ENCODE measurements at regions of chr22 and their contacts with region 1.

Region 1: DNA sequence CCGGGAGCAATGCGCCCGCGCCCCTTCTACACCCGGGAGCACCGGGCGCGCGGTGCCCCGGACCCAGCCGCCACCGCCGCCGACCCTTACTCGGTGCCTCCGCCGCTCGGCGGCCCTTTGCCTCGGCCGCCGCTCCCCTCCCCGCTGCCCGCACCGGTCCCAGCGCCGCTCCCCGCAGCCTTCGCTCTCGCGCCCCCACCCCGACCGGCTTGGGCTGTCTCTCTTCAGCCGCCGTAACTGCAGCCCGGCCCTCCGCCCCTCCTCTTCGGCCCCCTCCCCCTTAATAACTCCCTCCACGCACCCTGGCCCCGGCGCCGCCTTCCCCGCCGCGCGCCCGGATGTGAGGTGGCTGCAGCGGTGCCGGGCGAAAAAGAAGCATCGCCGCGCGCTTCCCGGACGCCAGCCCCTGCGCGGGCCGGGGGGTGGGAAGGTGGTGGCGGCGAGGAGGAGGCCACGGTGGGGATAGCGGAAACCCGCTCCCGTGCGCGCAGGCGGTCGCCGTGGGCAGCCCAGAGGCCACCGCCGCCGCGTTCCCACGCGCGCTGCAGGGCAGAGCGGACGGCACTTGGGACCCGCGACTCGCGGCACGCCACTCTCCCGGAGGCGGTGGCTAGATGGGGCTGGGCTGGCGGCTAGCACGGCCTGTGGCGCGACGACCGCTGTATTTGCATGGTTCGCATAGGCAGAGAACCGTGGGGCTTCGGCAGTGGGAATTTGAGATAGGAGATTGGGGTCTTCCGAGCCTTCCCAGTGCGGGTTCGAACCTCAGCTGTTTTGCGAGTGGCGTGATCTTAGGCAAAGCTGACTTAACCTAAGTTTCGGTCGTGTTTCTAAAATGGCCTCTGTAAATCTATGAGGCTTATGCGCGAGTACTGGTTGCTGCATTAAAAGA is at the start of gene EIF4ENIF1:
- DNase-seq: peak; percentile 93
- ATAC-seq: peak; percentile 67
- H3K4me3 ChIP-seq: peak within 1 kb of the TSS; percentile 67 to 100 (median 84)
- H3K4me3 Mint-ChIP-seq: peak within 1 kb of the TSS; percentile 91
- H3K27ac ChIP-seq: peak within 1 kb of the TSS; percentile 93 to 99
- H3K27ac Mint-ChIP-seq: peak within 1 kb of the TSS; percentile 98
- H3K4me1 ChIP-seq: peaks cover 29 to 47% of the 10 kb centered on the region in 2 donors
- H3K4me1 Mint-ChIP-seq: peaks cover 52% of the 10 kb centered on the region
- H3K27me3 ChIP-seq: no peaks in the 10 kb centered on the region
- H3K27me3 Mint-ChIP-seq: no peaks in the 10 kb centered on the region
- CTCF ChIP-seq: no peak
- total RNA-seq, gene EIF4ENIF1: 58.3 and 62.7 TPM in 2 replicates

Region 2: DNA sequence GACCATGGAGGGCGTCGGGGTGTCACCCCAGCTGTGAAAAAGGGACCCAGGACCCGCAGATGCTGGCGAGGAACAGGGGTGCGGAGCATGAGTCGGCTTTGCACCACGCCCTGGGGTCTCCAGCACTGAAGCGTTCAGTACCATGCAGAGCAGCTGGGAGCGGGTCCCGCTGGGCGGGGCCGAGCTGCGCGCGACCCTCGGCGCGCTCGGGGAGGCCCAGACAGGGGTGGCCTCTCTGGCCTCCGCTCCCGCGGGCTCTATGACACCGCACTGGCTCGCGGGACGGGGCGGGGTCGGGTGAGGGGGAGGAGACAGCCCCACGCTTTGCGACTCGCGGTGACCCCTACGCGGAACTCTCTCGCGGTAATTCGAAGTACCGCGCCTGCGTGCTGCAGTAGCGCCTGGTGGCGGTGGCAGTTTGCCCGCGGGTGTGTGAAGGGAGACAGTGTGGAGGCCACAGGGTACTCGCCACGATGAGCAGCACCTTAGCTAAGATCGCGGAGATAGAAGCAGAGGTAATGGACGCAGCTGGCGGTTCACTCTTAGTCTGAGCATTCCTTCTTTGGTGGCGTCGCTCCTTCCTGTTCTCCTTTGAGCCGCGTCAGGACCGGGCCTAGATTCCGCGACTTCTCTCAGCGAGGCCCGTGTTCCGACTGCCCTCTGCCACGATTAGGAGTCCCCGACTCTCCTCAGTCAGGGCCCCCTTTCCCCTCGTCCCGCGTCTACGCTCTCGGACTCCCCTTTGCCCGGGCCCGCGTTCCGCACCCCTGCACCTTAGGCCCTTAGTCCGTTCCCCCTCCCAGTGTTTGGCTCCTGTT is 90.4 kb before region 1 on chr22 and contains the start of gene DRG1:
- CTCF ChIA-PET with region 1: interaction called, 3 read pairs
- POLR2A ChIA-PET with region 1: no interaction called
- intact Hi-C with region 1: loop called (anchors 1 kb)
- DNase-seq: peak; percentile 95
- ATAC-seq: peak; percentile 99
- H3K4me3 ChIP-seq: peak within 1 kb of the TSS; percentile 79 to 88 (median 85)
- H3K4me3 Mint-ChIP-seq: peak within 1 kb of the TSS; percentile 98
- H3K27ac ChIP-seq: peak within 1 kb of the TSS; percentile 60 to 89
- H3K27ac Mint-ChIP-seq: peak within 1 kb of the TSS; percentile 95
- H3K4me1 ChIP-seq: peaks cover 13 to 17% of the 10 kb centered on the region in 2 donors
- H3K4me1 Mint-ChIP-seq: peaks cover 21% of the 10 kb centered on the region
- H3K27me3 ChIP-seq: no peaks in the 10 kb centered on the region
- H3K27me3 Mint-ChIP-seq: peaks cover 2% of the 10 kb centered on the region
- CTCF ChIP-seq: no peak
- total RNA-seq, gene DRG1: 58.9 and 77.7 TPM in 2 replicates

Region 3: DNA sequence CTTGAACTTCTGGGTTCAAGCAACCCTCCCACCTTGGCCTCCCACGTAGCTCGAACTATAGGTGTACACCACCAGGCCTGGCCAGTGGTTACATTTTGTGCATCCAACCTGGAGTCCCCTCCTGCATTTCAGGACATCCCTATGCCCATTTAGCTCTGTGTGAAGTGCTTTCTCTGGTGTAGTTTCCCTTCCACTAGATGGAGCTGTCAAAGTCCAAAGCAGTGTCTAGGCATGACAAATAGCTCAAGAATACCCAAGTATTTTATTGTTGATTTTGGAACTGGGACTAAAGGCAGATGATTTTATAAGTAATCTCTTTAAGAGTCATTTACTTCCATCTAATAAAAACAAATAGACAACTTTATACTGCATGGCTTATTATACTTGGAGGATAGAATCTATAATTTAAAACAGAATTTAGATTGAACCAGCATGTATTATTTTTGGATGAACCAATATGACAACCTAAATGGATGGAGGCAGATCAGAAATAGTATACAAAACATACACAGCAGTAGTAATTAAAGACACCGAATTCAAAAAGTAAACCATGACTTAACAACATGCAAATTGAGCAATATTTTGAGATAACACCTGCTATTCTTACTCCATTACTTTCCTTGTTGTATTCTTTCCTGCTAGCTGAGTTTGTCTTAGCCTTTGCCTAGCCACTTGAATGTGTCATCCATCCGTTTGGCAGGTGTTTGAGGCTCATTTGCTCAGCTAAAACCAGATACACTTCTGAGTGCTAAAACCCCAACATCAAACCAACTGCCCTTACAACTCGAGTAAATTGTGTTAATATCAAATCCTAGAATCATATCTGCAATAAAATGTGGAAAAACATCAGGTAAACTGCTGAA is 37.9 kb before region 1 on chr22:
- CTCF ChIA-PET with region 1: interaction called, 10 read pairs
- POLR2A ChIA-PET with region 1: interaction called, 12 read pairs
- intact Hi-C with region 1: loop called (anchors 5 kb)
- DNase-seq: peak; percentile 54
- ATAC-seq: peak; percentile 49
- H3K4me3 ChIP-seq: no peak overlapping the region
- H3K4me3 Mint-ChIP-seq: no peak overlapping the region
- H3K27ac ChIP-seq: no peak overlapping the region
- H3K27ac Mint-ChIP-seq: no peak overlapping the region
- H3K4me1 ChIP-seq: peaks cover 8 to 11% of the 10 kb centered on the region in 2 donors
- H3K4me1 Mint-ChIP-seq: peaks cover 19% of the 10 kb centered on the region
- H3K27me3 ChIP-seq: no peaks in the 10 kb centered on the region
- H3K27me3 Mint-ChIP-seq: no peaks in the 10 kb centered on the region
- CTCF ChIP-seq: peak; percentile 56

Region 4: DNA sequence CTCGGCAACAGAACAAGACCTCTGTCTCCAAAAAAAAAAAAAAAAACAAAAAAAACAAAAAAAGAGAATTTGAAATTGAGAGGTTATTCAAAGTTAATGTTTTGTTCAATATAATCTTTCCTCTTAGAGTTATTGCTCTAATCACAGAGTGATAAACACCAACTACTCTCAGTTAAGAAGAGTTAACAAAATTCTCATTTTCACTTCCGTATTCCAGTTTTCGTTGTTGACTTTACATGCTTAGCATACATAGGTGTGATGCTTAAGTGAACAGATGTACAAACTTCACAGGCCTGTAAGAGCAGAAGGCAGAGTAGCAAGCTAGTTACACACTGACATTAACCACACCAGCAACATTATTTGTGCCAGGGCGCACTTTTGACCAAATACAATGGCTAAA is 12.5 kb before region 1 on chr22:
- CTCF ChIA-PET with region 1: interaction called, 4 read pairs
- POLR2A ChIA-PET with region 1: interaction called, 9 read pairs
- intact Hi-C with region 1: loop called (anchors 1 kb)
- DNase-seq: peak; percentile 64
- ATAC-seq: peak; percentile 90
- H3K4me3 ChIP-seq: no peak overlapping the region
- H3K4me3 Mint-ChIP-seq: peak overlapping the region; percentile 44
- H3K27ac ChIP-seq: peak overlapping the region; percentile 17 to 52
- H3K27ac Mint-ChIP-seq: peak overlapping the region; percentile 79
- H3K4me1 ChIP-seq: peaks cover 13 to 17% of the 10 kb centered on the region in 2 donors
- H3K4me1 Mint-ChIP-seq: peaks cover 19% of the 10 kb centered on the region
- H3K27me3 ChIP-seq: no peaks in the 10 kb centered on the region
- H3K27me3 Mint-ChIP-seq: no peaks in the 10 kb centered on the region
- CTCF ChIP-seq: no peak

Region 5: DNA sequence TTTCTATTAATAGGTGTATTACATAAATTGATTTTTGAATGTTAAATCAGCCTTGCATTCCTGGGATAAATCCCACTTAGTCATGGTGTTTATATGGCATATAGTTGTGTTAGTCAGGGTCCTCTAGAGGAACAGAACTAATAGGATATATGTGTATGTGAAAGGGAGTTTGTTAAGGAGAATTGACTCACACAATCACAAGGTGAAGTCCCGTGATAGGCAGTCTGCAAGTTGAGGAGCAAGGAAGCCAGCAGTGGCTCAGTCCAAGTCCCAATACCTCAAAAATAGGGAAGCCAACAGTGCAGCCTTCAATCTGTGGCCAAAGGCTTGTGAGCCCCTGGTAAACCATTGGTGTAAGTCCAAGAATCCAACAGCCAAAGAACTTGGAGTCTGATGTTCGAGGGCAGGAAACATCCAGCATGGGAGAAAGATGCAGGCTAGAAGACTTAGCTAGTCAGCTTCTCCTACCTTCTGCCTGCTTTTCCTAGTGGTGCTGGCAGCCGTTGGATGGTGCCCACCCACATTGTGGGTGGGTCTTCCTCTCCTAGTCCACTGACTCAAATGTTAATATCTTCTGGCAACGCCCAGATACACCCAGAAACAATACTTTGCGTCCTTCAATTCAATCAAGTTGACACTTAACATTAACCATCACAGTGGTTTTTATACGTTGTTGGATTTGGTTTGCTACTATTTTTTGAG is 19.4 kb after region 1 on chr22:
- CTCF ChIA-PET with region 1: no interaction called
- POLR2A ChIA-PET with region 1: no interaction called
- intact Hi-C with region 1: no loop called
- DNase-seq: no peak
- ATAC-seq: no peak
- H3K4me3 ChIP-seq: no peak overlapping the region
- H3K4me3 Mint-ChIP-seq: no peak overlapping the region
- H3K27ac ChIP-seq: no peak overlapping the region
- H3K27ac Mint-ChIP-seq: no peak overlapping the region
- H3K4me1 ChIP-seq: no peaks in the 10 kb centered on the region
- H3K4me1 Mint-ChIP-seq: peaks cover 2% of the 10 kb centered on the region
- H3K27me3 ChIP-seq: no peaks in the 10 kb centered on the region
- H3K27me3 Mint-ChIP-seq: no peaks in the 10 kb centered on the region
- CTCF ChIP-seq: no peak

Region 6: GRCh38 chr22:31550040-31550439 is 60.2 kb after region 1 on chr22:
- CTCF ChIA-PET with region 1: no interaction called
- POLR2A ChIA-PET with region 1: no interaction called
- intact Hi-C with region 1: no loop called
- DNase-seq: no peak
- ATAC-seq: no peak
- H3K4me3 ChIP-seq: no peak overlapping the region
- H3K4me3 Mint-ChIP-seq: no peak overlapping the region
- H3K27ac ChIP-seq: no peak overlapping the region
- H3K27ac Mint-ChIP-seq: no peak overlapping the region
- H3K4me1 ChIP-seq: no peaks in the 10 kb centered on the region
- H3K4me1 Mint-ChIP-seq: peaks cover 7% of the 10 kb centered on the region
- H3K27me3 ChIP-seq: no peaks in the 10 kb centered on the region
- H3K27me3 Mint-ChIP-seq: no peaks in the 10 kb centered on the region
- CTCF ChIP-seq: no peak

Measured in B cell (primary cell).